ENCODE measurements at regions of chr12 and their contacts with region 1.

Region 1: DNA sequence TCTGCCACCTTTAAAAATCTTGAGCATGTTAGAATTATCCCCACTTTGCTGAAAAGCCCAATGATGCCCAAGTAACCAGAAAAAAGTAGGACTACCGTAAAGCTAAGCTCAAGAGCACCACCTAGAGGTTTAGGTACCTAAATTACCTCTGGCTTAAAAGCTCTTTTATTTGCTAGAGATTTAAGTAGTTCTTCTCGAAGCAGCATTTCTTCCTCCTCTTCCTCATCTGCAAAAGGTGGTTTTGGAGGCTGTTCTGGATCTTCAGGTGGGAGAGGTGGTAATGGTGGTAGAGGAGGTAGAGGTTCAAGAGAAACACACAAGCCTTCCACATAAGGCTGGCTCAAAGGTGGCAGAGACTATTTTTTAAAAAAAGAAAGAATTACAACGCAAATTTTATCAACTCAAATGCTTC is 26.9 kb downstream of the ZFC3H1 start:
- DNase-seq: peak; percentile 34
- ATAC-seq: peak; percentile 47
- H3K4me3 Mint-ChIP-seq: no peak overlapping the region
- H3K27ac Mint-ChIP-seq: peak overlapping the region; percentile 28
- H3K4me1 Mint-ChIP-seq: peaks cover 7% of the 10 kb centered on the region
- H3K27me3 Mint-ChIP-seq: no peaks in the 10 kb centered on the region

Region 2: DNA sequence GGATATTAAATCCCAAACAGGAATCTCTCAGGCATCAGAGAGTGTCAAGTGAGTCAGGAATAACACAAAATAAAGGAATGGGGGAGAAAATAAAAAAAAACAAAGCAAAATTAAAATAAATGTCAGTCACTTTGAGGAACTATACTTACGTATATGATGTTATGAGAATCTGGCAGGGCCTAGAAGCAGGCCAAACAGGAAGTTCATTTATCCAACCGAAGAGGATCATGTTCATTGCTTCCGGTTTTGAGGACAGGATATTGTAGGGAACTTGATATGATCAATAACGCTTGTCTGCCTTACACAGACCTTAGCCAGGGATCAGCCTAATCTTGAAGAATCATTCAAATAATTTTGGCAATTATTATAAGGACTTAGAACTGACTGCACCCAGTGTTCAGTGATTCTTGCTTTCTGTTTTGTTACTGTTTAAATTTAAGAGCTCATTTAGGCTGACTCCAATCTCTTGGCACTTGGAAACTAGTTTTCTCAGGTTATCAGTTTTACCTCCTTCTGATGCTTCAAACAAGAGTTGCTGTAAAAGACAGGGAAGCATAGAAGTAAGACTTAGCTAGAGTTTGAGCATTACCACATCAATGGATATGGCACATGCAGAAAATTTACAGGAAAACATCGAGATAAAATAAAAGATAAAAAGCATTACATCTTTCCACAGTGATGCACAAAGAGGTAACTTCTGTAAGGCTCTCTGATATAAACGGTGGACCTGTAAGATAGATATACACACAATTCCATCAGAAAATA is 26.5 kb before region 1 on chr12:
- CTCF ChIA-PET with region 1: interaction called, 24 read pairs
- POLR2A ChIA-PET with region 1: no interaction called
- DNase-seq: no peak
- ATAC-seq: peak; percentile 39
- H3K4me3 Mint-ChIP-seq: no peak overlapping the region
- H3K27ac Mint-ChIP-seq: peak overlapping the region; percentile 60
- H3K4me1 Mint-ChIP-seq: peaks cover 11% of the 10 kb centered on the region
- H3K27me3 Mint-ChIP-seq: no peaks in the 10 kb centered on the region

Region 3: DNA sequence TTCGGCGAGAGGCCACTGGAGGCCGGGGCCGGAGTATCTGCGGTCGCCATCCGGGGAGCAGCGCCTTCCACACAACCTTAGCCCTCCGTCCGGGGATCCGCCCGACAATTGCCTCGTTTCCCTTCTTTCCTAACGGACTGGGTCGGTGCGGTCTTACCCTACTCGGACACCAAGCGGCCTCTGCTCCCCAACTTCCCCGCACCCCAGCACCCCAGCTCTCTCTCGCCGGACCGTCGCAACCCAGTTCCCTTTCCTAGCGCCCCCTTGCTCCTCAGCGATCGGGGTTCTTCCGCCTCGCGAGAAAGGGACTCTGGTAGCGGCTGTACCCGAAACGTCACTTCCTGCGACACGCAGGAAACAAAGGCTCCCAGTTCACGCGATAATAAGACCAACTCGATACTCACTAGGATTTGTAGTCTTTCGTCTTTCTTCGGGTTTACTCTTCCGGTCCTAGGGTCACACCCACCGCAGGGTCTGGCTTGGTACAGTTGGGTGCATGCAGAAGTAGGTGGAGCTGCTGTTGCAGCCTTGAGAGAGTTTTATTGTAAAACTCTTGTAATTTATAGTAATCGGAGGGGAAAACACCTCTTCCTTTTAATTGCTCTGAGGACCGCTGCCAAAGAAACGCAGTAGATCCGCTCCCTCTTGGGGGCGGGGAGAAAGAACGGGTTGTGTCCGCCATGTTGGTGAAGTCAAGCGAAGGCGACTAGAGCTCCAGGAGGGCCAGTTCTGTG is 27.0 kb after region 1 on chr12 and contains the start of gene ZFC3H1:
- CTCF ChIA-PET with region 1: interaction called, 32 read pairs
- POLR2A ChIA-PET with region 1: interaction called, 11 read pairs
- DNase-seq: peak; percentile 96
- ATAC-seq: peak; percentile 90
- H3K4me3 Mint-ChIP-seq: peak within 1 kb of the TSS; percentile 98
- H3K27ac Mint-ChIP-seq: peak within 1 kb of the TSS; percentile 100
- H3K4me1 Mint-ChIP-seq: peaks cover 39% of the 10 kb centered on the region
- H3K27me3 Mint-ChIP-seq: no peaks in the 10 kb centered on the region
- total RNA-seq, gene ZFC3H1: 45.9 to 49.9 TPM

Region 4: DNA sequence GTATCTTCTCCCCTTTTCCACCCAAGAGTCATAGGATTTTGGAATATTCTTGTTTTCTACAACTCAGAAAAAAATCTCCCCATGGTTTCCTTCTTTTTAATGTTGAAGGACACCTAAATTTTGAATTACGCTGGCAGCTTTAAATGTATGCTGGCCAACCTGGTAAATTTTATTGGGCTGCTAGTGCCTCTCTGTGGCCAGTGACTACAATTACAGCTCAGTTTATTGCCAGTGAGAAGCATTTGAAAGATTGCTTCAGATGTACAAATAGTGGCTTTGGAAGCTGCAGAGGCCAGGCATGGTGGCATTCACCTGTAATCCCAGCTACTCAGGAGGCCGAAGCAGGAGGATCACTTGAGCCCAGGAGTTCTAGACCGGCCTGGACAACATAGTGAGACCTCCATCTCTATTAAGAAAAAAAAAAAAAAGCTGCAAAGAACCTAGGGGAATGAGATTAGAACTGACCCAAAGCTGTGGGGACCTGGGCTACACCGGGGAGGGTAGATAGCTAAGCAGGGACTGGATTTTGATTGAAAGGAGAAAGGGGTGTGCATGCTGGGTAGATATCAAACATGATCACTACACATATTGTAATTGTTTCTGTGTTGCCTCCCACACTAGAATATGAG is 110.4 kb after region 1 on chr12:
- CTCF ChIA-PET with region 1: interaction called, 37 read pairs
- POLR2A ChIA-PET with region 1: no interaction called
- DNase-seq: peak; percentile 60
- ATAC-seq: peak; percentile 77
- H3K4me3 Mint-ChIP-seq: no peak overlapping the region
- H3K27ac Mint-ChIP-seq: no peak overlapping the region
- H3K4me1 Mint-ChIP-seq: no peaks in the 10 kb centered on the region
- H3K27me3 Mint-ChIP-seq: peaks cover 37% of the 10 kb centered on the region

Measured in activated CD8-positive, alpha-beta T cell treated with anti-CD3 and anti-CD28 coated beads, Interleukin-2, amount 10 ng/mL, durations not matched to agents 7 days and 5 days (primary cell).